Cardiac septum (tissue), 1 donor: ENCODE measurements at regions of chr16 and their contacts with region 1.

Region 1: GRCh38 chr16:17334096-17334495 is 136.7 kb downstream of the XYLT1 start:
- DNase-seq: no peak

Region 2: DNA sequence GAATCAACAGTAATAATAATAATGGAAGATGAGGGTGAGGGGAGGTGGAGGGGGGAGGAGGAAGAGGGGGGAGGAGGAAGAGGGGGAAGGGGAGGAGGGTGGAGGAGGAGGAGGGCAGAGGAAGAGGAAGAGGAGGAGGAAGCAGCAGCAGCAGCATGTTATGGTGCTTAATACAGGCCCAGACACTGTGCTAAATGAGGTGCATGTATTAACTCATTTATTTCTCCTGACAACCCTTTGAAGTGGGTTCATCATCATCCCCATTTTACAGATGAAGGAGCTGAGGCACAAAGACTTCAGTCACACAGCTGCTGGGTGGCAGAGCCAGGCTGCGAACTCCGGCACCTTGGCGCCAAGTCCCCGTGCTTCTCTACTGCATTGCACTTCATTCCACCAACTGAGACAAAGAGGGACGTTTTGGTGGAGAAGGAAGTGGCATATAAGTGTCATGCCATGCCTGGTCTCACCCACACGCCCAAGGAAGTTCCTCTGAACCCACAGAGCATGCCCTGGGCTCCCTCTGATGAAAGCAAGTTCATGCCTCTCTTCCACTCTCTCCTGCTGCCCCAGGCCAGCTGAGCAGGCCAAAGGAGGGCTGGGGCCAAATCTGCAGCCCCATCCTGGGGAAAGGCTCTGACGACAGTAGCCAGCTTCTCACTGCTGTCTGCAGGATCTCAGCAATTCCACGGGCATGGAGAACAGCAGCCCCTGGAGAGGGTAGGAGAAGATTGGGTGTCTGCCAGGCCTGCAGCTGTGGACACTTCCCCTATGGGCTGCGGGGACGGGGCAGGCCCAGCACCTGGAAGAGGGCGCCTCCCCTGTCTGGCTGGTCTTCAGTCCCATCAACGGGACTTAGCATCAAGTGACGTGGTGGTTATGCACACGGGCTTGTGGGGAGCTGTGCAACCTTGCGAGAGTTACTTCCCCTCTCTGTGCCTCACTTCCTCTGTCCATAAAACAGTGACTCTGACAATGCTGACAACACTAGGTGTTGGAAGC is 114.8 kb after region 1 on chr16:
- intact Hi-C with region 1: loop called (anchors 10 kb)
- DNase-seq: peak; percentile 80